Natural killer cell (primary cell): ENCODE measurements at regions of chrX and their contacts with region 1.

Region 1: DNA sequence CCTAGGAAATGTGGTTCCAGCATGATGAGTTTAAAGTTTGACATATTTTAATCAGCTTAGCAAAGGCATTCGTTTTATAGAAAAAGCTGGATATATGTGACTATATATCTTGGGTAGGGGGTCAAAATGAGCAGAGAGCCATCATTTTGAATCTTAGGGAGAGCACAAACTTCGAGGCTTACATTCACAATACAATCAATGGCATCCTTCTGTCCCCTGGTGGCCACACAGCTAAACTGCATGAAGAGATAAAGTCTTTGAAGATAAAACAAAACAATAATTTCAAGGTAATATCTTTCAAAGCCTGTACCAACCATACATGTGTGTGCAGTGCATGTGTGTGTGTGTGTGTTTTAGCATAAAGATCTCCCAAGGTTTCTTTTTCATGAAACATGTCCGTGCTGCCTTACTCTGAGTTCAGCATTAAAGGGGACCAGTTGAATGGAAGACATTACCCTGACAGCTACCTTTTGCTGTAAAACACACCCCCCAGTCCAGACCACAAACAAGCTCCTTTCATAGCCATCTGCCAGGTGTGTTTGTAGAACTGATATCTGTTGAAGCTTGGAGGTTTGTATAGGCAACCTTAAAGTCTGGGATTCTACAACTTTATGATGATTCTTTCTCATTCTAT is 22.0 kb downstream of the DYNLT3 start:
- DNase-seq: peak; percentile 30 to 78
- ATAC-seq: peak; percentile 62 to 88 (median 81)
- H3K4me3 ChIP-seq: no peak overlapping the region
- H3K4me3 Mint-ChIP-seq: no peak overlapping the region
- H3K27ac ChIP-seq: no peak overlapping the region
- H3K27ac Mint-ChIP-seq: peak overlapping the region in 1 of 2 donors; percentile 1
- H3K4me1 ChIP-seq: peaks cover 8% of the 10 kb centered on the region
- H3K4me1 Mint-ChIP-seq: peaks cover 14 to 15% of the 10 kb centered on the region in 2 donors
- H3K27me3 ChIP-seq: no peaks in the 10 kb centered on the region
- H3K27me3 Mint-ChIP-seq: peaks cover 0 to 6% of the 10 kb centered on the region in 2 donors
- CTCF ChIP-seq: peak; percentile 85

Region 2: GRCh38 chrX:37509349-37509748 is 316.0 kb before region 1 on chrX:
- intact Hi-C with region 1: loop called (anchors 10 kb)
- DNase-seq: peak in 1 of 2 donors; percentile 1
- ATAC-seq: no peak
- H3K4me3 ChIP-seq: no peak overlapping the region
- H3K4me3 Mint-ChIP-seq: no peak overlapping the region
- H3K27ac ChIP-seq: no peak overlapping the region
- H3K27ac Mint-ChIP-seq: no peak overlapping the region
- H3K4me1 ChIP-seq: no peaks in the 10 kb centered on the region
- H3K4me1 Mint-ChIP-seq: no peaks in the 10 kb centered on the region
- H3K27me3 ChIP-seq: no peaks in the 10 kb centered on the region
- H3K27me3 Mint-ChIP-seq: no peaks in the 10 kb centered on the region
- CTCF ChIP-seq: no peak

Region 3: GRCh38 chrX:37745354-37745753 is 80.0 kb before region 1 on chrX:
- intact Hi-C with region 1: loop called (anchors 1 kb)
- DNase-seq: peak; percentile 62 to 85
- ATAC-seq: peak; percentile 64 to 83 (median 80)
- H3K4me3 ChIP-seq: no peak overlapping the region
- H3K4me3 Mint-ChIP-seq: no peak overlapping the region
- H3K27ac ChIP-seq: no peak overlapping the region
- H3K27ac Mint-ChIP-seq: peak overlapping the region; percentile 61 to 82
- H3K4me1 ChIP-seq: peaks cover 16% of the 10 kb centered on the region
- H3K4me1 Mint-ChIP-seq: peaks cover 18% of the 10 kb centered on the region in 2 donors
- H3K27me3 ChIP-seq: no peaks in the 10 kb centered on the region
- H3K27me3 Mint-ChIP-seq: peaks cover 0 to 11% of the 10 kb centered on the region in 2 donors
- CTCF ChIP-seq: peak; percentile 70

Region 4: DNA sequence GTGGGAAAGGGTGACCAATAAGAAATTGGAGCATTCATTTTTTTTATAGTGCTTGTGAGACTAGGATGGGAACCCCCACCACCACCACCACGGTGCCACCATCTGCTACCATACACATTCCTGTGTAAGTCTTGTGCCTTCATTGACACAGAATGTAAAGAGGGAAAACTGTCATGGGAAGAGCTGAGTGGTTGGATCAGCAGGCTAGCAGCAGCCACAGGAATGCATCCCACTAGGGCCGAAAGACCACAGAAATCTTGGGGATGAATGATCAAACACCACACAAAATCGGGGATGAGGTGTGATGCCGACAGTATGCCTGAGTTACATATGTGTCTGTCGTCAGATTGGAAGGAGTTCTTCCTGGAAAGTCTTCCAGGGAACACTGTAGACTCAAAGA is 326.1 kb after region 1 on chrX:
- intact Hi-C with region 1: no loop called
- DNase-seq: no peak
- ATAC-seq: no peak
- H3K4me3 ChIP-seq: no peak overlapping the region
- H3K4me3 Mint-ChIP-seq: no peak overlapping the region
- H3K27ac ChIP-seq: no peak overlapping the region
- H3K27ac Mint-ChIP-seq: no peak overlapping the region
- H3K4me1 ChIP-seq: no peaks in the 10 kb centered on the region
- H3K4me1 Mint-ChIP-seq: no peaks in the 10 kb centered on the region
- H3K27me3 ChIP-seq: no peaks in the 10 kb centered on the region
- H3K27me3 Mint-ChIP-seq: peaks cover 0 to 30% of the 10 kb centered on the region in 2 donors
- CTCF ChIP-seq: no peak